PC-9 (cell line): ENCODE measurements at regions of chr6 and their contacts with region 1.

Region 1: GRCh38 chr6:39407446-39407993 is 85.0 kb upstream of the KCNK16 start:
- DNase-seq: no peak
- H3K4me3 ChIP-seq: no peak overlapping the region
- H3K27ac ChIP-seq: no peak overlapping the region
- H3K4me1 ChIP-seq: no peaks in the 10 kb centered on the region
- H3K27me3 ChIP-seq: no peaks in the 10 kb centered on the region
- CTCF ChIP-seq: no peak

Region 2: GRCh38 chr6:38279420-38279819 is 1128.1 kb before region 1 on chr6:
- CTCF ChIA-PET with region 1: no interaction called
- POLR2A ChIA-PET with region 1: no interaction called
- intact Hi-C with region 1: no loop called
- DNase-seq: no peak
- H3K4me3 ChIP-seq: no peak overlapping the region
- H3K27ac ChIP-seq: no peak overlapping the region
- H3K4me1 ChIP-seq: peaks cover 3% of the 10 kb centered on the region; the same call in 1 of the 2 replicates
- H3K27me3 ChIP-seq: no peaks in the 10 kb centered on the region
- CTCF ChIP-seq: no peak; the same call in 1 of the 2 replicates

Region 3: GRCh38 chr6:39189915-39190544 is 217.5 kb before region 1 on chr6:
- CTCF ChIA-PET with region 1: no interaction called
- POLR2A ChIA-PET with region 1: no interaction called
- intact Hi-C with region 1: no loop called
- DNase-seq: no peak
- H3K4me3 ChIP-seq: no peak overlapping the region
- H3K27ac ChIP-seq: no peak overlapping the region
- H3K4me1 ChIP-seq: peaks cover 49% of the 10 kb centered on the region
- H3K27me3 ChIP-seq: no peaks in the 10 kb centered on the region
- CTCF ChIP-seq: peak; percentile 71

Region 4: GRCh38 chr6:39791850-39792539 is 384.5 kb after region 1 on chr6 and contains the start of gene DAAM2:
- CTCF ChIA-PET with region 1: interaction called, 16 read pairs
- POLR2A ChIA-PET with region 1: no interaction called
- intact Hi-C with region 1: no loop called
- DNase-seq: no peak
- H3K4me3 ChIP-seq: no peak within 1 kb of the TSS
- H3K27ac ChIP-seq: no peak within 1 kb of the TSS
- H3K4me1 ChIP-seq: no peaks in the 10 kb centered on the region
- H3K27me3 ChIP-seq: peaks cover 48% of the 10 kb centered on the region
- CTCF ChIP-seq: no peak
- total RNA-seq, gene DAAM2: not detected in 2 replicates